Body of pancreas (tissue), 4 donors: ENCODE measurements at regions of chr15 and their contacts with region 1.

Region 1: DNA sequence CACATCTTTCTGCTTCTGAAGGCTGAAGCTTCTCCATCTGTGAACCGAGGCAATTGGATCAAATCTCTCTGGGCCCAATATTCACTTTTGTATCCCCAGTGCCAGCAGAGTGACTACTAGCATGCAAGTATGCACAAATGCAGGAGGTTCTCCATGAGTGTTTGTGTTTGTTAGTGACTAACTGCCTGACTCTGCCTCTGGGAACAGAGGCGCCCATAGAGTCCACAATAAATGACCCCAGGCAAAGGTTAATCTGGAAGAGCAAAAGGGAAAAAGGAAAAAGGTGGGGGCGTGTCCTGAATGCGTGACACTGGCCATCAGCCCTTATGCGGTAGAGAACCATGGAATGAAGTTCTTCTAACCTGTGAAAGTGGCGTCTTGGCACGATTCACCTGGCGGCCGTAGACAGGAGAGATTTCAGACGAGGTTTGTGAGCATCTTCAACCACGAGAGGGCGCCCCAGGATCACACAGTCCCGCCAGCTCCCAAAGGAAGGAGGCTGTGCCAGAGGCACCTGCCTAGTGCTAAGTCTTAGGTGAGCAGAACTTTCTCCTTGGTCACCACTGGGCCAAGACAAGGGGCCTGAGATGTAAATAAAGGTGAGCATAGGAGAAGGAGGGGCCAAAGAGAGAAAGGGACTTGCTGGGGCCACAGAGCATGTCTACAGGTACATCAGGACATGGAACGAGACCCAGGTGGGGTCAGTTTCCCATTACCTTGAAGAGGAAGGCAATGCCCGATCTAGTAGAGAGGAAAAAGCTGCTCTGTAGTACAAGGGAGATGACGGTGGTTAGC is 44.2 kb downstream of the RBPMS2 start:
- DNase-seq: peak; percentile 91 to 96 (median 94)
- ATAC-seq: peak; percentile 90
- H3K4me3 ChIP-seq: no peak overlapping the region
- H3K27ac ChIP-seq: no peak overlapping the region
- H3K4me1 ChIP-seq: peaks cover 3% of the 10 kb centered on the region
- H3K27me3 ChIP-seq: no peaks in the 10 kb centered on the region
- CTCF ChIP-seq: peak; percentile 82 to 98 (median 97)
- POLR2A ChIP-seq: no peak

Region 2: DNA sequence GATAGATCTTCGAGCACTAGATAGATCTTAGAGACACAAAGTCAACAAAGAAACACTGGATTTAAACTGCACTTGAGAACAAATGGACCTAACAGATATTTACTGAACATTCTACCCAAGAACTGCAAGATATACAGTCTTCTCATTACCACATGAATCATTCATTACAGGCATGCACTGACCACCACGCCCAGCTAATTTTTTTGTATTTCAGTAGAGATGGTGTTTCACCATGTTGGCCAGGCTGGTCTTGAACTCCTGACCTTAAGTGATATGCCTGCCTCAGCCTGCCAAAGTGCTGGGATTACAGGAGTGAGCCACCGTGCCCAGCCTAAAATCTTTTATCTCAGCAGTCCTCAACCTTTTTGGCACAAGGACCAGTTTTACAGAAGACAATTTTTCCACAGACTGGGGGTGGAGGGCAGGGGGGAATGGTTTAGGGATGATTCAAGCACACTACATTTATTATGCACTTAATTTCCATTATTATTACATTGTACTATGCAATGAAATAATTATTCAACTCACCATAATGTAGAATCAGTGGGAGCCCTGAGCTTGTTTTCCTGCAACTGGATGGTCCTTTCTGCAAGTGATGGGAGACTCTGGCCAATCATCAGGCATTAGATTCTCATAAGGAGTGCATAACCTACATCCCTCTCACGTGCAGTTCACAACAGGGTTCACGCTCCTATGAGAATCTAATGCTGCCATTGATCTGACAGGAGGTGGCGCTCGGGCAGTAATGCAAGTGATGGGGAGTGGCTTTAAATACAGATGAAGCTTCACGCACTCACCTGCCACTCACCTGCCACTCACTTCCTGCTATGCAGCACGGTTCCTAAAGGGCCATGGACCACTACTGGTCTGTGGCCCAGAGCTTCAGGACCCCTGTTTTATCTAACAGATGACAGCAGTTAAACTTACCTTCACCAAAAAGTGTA is 397.0 kb before region 1 on chr15:
- intact Hi-C with region 1: no loop called
- DNase-seq: no peak
- ATAC-seq: no peak
- H3K4me3 ChIP-seq: no peak overlapping the region
- H3K27ac ChIP-seq: no peak overlapping the region
- H3K4me1 ChIP-seq: no peaks in the 10 kb centered on the region
- H3K27me3 ChIP-seq: no peaks in the 10 kb centered on the region
- CTCF ChIP-seq: no peak
- POLR2A ChIP-seq: no peak

Region 3: DNA sequence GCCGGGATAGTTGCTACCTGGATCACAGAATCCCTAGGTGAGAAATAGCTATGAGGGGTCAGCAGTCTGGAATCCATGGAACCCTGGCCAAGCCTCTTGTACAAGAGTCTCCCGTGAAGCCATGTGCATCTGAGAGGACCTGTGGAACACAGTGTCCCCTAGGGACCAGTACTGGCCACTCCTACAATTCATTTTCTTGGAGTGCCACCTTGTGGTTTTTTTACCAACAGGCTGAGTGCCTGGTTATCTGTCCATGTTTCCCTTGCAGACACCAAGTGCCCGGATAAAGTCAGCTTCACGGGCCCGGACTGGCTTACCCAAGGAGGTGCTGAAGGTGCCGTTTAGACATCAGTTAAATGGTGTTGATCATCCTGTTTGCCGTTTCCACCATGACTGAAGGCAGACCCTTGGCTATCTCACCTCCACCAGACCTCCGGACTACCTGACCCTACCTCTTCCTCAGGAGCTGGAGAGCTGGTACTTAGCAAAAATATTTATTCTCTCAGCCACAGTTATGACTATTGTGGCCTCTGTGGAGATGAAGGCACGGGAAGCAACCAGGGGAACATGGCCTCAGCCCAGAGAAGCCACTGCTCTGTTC is 49.7 kb before region 1 on chr15:
- intact Hi-C with region 1: loop called (anchors 2 kb)
- DNase-seq: peak; percentile 57 to 76 (median 62)
- ATAC-seq: peak; percentile 88
- H3K4me3 ChIP-seq: no peak overlapping the region
- H3K27ac ChIP-seq: no peak overlapping the region
- H3K4me1 ChIP-seq: no peaks in the 10 kb centered on the region
- H3K27me3 ChIP-seq: no peaks in the 10 kb centered on the region
- CTCF ChIP-seq: peak; percentile 65 to 98 (median 92)
- POLR2A ChIP-seq: no peak

Region 4: GRCh38 chr15:64809649-64810496 is 78.7 kb after region 1 on chr15:
- intact Hi-C with region 1: loop called (anchors 5 kb)
- DNase-seq: peak; percentile 75 to 84 (median 80)
- ATAC-seq: peak; percentile 77
- H3K4me3 ChIP-seq: no peak overlapping the region
- H3K27ac ChIP-seq: no peak overlapping the region
- H3K4me1 ChIP-seq: no peaks in the 10 kb centered on the region
- H3K27me3 ChIP-seq: no peaks in the 10 kb centered on the region
- CTCF ChIP-seq: peak; percentile 67 to 93 (median 84)
- POLR2A ChIP-seq: no peak

Region 5: DNA sequence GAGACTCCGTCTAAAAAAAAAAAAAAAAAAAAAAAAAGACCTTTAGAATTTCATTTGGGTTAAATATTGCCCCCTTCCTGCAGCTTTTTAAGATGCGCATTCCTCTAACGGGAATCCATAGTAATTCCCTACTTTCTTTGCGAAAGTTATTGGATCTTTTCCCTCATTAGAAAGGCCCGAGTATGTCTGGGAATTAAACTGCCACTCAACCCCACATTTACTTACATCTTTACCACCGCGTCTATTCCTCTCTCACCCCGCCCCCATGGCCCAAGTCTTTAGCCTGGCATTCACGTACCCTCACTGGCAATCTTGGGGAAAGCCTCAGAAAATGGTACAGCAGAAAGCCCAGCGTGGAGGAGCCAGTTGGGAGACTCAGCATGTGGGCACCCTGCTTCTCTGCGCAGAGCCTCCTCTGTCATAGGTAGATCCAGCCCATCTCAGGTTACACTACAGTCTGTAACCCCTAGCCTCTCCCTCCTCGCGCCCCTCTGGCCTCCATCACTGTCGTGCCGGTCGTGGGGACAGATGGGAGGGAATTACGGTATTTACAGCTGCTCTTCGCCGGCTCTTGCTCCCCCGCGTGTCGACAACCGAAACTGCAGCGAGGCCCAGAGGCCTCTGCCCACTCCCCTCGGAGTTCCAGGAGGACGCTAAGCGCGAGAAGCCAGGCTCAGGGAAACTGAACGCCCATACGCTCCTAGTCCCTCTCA is 174.1 kb after region 1 on chr15:
- intact Hi-C with region 1: loop called (anchors 10 kb)
- DNase-seq: peak; percentile 70 to 80 (median 76)
- ATAC-seq: peak; percentile 85
- H3K4me3 ChIP-seq: no peak overlapping the region
- H3K27ac ChIP-seq: no peak overlapping the region
- H3K4me1 ChIP-seq: peaks cover 8% of the 10 kb centered on the region
- H3K27me3 ChIP-seq: no peaks in the 10 kb centered on the region
- CTCF ChIP-seq: peak; percentile 63 to 84 (median 80)
- POLR2A ChIP-seq: no peak

Region 6: DNA sequence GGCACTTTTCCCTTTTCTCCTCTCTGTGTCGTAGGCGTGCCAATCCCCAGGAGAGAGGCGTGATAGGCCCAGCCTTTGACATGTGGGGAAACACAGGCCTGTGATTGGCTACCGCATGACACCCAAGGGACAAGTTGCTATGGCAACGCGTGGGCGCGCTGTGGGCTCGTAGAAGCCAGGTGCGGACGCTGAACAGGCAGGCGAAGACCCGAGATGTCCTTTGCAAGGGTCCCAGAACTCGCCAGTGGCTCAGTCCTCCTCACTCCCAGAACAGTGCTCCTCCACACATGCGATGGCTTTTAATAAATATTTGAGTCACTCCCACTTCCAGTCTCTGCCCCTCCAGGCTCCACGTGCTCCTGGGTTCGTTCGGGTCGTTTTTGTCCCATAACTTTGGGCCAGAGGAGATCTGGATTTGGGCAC is 318.2 kb after region 1 on chr15:
- intact Hi-C with region 1: no loop called
- DNase-seq: peak; percentile 89 to 96 (median 94)
- ATAC-seq: peak; percentile 98
- H3K4me3 ChIP-seq: no peak overlapping the region
- H3K27ac ChIP-seq: no peak overlapping the region
- H3K4me1 ChIP-seq: peaks cover 19% of the 10 kb centered on the region
- H3K27me3 ChIP-seq: no peaks in the 10 kb centered on the region
- CTCF ChIP-seq: no peak
- POLR2A ChIP-seq: no peak